ENCODE measurements at regions of chr5 and their contacts with region 1.

Region 1: GRCh38 chr5:40688127-40688761 is 8.5 kb downstream of the PTGER4 start:
- DNase-seq: peak; percentile 90
- H3K4me3 ChIP-seq: peak overlapping the region in 1 of 4 donors; percentile 97
- H3K27ac ChIP-seq: peak overlapping the region; percentile 94 to 96 (median 94)
- H3K4me1 ChIP-seq: peaks cover 0 to 68% (median 28%) of the 10 kb centered on the region in 4 donors
- H3K27me3 ChIP-seq: no peaks in the 10 kb centered on the region
- CTCF ChIP-seq: peak; percentile 78 to 94 (median 89)
- EP300 ChIP-seq: no peak
- POLR2A ChIP-seq: no peak

Region 2: DNA sequence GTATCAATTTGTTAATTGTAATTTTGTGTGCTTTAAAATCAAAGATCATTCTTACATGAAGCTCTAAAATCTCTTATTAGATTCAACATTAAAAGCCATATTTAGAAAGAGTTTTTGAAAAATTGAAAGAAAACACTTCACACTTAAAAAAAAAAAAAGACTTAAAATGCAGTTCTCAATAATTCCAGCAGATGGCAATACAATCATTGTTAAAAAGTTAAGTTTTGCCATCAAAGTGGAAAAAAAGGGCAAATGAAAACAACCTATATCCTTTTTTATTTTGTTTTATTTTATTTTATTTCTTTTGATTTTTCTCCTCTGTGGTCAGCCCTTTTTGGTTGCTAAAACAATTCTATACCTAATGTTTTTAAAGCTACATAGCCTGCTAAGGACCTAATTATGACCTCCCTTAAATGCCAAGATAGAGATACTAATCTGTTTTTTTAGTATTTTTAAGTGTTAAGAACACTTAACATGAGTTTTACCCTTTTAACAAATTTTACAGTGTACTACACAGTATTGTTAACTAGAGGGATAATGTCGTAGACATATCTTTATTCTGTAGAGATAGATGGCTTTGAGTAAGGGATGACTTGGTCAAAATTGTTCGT is 1109.3 kb before region 1 on chr5:
- in situ Hi-C with region 1: loop called in 1 of 4 experiments (anchors 10 kb)
- intact Hi-C with region 1: loop called (anchors 2 kb)
- DNase-seq: no peak
- H3K4me3 ChIP-seq: no peak overlapping the region
- H3K27ac ChIP-seq: peak overlapping the region in 1 of 4 donors; percentile 13
- H3K4me1 ChIP-seq: peaks cover 0 to 28% (median 13%) of the 10 kb centered on the region in 4 donors
- H3K27me3 ChIP-seq: no peaks in the 10 kb centered on the region
- CTCF ChIP-seq: peak; percentile 68 to 77 (median 73)
- EP300 ChIP-seq: no peak
- POLR2A ChIP-seq: no peak

Region 3: GRCh38 chr5:39714036-39714698 is 974.1 kb before region 1 on chr5:
- in situ Hi-C with region 1: no loop called
- intact Hi-C with region 1: loop called (anchors 10 kb)
- DNase-seq: peak; percentile 49
- H3K4me3 ChIP-seq: no peak overlapping the region
- H3K27ac ChIP-seq: peak overlapping the region in 3 of 4 donors; percentile 25 to 35 (median 33)
- H3K4me1 ChIP-seq: peaks cover 0 to 12% (median 0%) of the 10 kb centered on the region in 4 donors
- H3K27me3 ChIP-seq: no peaks in the 10 kb centered on the region
- CTCF ChIP-seq: peak; percentile 59 to 71 (median 70)
- EP300 ChIP-seq: no peak
- POLR2A ChIP-seq: no peak

Region 4: GRCh38 chr5:39955156-39955555 is 733.1 kb before region 1 on chr5:
- in situ Hi-C with region 1: loop called in 2 of 4 experiments (anchors 5 to 10 kb)
- intact Hi-C with region 1: loop called (anchors 5 kb)
- DNase-seq: no peak
- H3K4me3 ChIP-seq: no peak overlapping the region
- H3K27ac ChIP-seq: no peak overlapping the region
- H3K4me1 ChIP-seq: no peaks in the 10 kb centered on the region
- H3K27me3 ChIP-seq: no peaks in the 10 kb centered on the region
- CTCF ChIP-seq: no peak
- EP300 ChIP-seq: no peak
- POLR2A ChIP-seq: no peak

Region 5: GRCh38 chr5:40386289-40386688 is 302.0 kb before region 1 on chr5:
- in situ Hi-C with region 1: loop called in 1 of 4 experiments (anchors 25 kb)
- intact Hi-C with region 1: no loop called
- DNase-seq: no peak
- H3K4me3 ChIP-seq: no peak overlapping the region
- H3K27ac ChIP-seq: peak overlapping the region in 2 of 4 donors; percentile 6 to 29
- H3K4me1 ChIP-seq: peaks cover 3 to 29% (median 5%) of the 10 kb centered on the region in 4 donors
- H3K27me3 ChIP-seq: no peaks in the 10 kb centered on the region
- CTCF ChIP-seq: no peak
- EP300 ChIP-seq: no peak
- POLR2A ChIP-seq: no peak

Region 6: DNA sequence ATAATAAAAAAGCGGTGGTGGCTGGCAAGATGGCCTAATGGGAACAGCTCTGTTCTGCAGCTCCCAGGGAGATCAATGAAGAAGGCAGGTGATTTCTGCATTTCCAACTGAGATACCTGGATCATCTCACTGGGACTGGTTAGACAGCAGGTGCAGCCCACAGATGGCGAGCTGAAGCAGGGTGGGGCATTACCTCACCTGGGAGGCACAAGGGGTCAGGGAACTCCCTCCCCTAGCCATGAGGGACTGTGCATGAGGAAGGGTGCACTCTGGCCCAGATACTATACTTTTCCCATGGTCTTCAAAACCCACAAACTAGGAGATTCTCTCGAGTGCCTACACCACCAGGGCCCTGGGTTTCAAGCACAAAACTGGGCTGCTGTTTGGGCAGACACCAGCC is 54.1 kb before region 1 on chr5:
- in situ Hi-C with region 1: no loop called
- intact Hi-C with region 1: no loop called
- DNase-seq: peak; percentile 32
- H3K4me3 ChIP-seq: no peak overlapping the region
- H3K27ac ChIP-seq: no peak overlapping the region
- H3K4me1 ChIP-seq: peaks cover 0 to 4% (median 1%) of the 10 kb centered on the region in 4 donors
- H3K27me3 ChIP-seq: no peaks in the 10 kb centered on the region
- CTCF ChIP-seq: no peak
- EP300 ChIP-seq: no peak
- POLR2A ChIP-seq: no peak